OCI-LY7 (cell line): ENCODE measurements at regions of chr14 and their contacts with region 1.

Region 1: DNA sequence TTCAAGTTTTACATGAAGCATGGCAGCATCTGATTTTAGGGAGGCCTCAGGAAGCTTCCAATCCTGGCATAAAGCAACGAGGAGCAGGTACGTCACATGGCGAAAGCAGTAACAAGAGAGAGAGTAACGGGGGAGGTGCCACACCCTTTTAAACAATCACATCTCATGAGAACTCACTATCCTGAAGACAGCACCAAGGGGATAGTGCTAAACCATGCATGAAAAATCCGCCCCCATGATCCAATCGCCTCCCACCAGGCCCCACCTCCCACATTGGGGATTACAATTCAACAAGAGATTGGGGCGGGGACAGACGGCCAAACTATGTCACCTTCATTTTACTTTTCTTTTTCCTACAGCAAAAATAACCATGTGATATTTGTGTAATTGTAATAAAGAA is 7.2 kb upstream of the MAP3K9 start:
- DNase-seq: no peak
- H3K4me3 ChIP-seq: no peak overlapping the region
- H3K27ac ChIP-seq: no peak overlapping the region
- H3K4me1 ChIP-seq: peaks cover 18% of the 10 kb centered on the region
- CTCF ChIP-seq: no peak

Region 2: GRCh38 chr14:70086685-70087379 is 729.7 kb before region 1 on chr14:
- CTCF ChIA-PET with region 1: no interaction called
- POLR2A ChIA-PET with region 1: no interaction called
- intact Hi-C with region 1: loop called (anchors 5 kb)
- DNase-seq: peak; percentile 24
- H3K4me3 ChIP-seq: no peak overlapping the region
- H3K27ac ChIP-seq: no peak overlapping the region
- H3K4me1 ChIP-seq: no peaks in the 10 kb centered on the region
- CTCF ChIP-seq: peak; percentile 76

Region 3: DNA sequence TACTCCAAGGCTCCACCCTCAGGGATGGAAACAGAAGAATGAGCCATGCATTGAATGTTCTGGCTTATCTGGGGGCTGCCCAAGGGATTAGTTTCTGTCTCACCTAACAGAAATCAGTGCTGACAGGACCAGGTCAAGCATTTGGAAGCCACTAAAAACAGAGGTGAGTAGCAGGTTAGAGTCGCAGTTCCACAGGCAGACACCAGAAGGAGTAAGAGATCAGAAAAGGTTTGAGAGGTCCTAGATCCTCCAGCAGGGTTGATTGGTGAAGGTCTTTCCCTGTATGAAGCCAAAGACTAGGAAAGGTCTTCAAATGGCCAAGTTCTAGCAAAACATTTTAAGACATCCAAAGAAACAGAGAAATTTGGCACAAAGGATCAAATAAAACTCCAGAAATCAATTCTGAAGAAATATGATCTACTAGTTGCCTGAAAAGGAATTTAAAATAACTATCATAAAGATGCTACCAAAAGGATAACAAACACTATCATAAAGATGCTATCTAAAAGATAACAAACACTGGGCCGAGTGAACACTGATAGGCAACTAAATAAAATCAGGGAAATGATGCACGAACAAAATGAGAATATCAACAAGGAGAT is 194.3 kb before region 1 on chr14:
- CTCF ChIA-PET with region 1: interaction called, 3 read pairs
- POLR2A ChIA-PET with region 1: interaction called, 6 read pairs
- intact Hi-C with region 1: loop called (anchors 2 kb)
- DNase-seq: peak; percentile 74
- H3K4me3 ChIP-seq: no peak overlapping the region
- H3K27ac ChIP-seq: no peak overlapping the region
- H3K4me1 ChIP-seq: no peaks in the 10 kb centered on the region
- CTCF ChIP-seq: peak; percentile 91

Region 4: DNA sequence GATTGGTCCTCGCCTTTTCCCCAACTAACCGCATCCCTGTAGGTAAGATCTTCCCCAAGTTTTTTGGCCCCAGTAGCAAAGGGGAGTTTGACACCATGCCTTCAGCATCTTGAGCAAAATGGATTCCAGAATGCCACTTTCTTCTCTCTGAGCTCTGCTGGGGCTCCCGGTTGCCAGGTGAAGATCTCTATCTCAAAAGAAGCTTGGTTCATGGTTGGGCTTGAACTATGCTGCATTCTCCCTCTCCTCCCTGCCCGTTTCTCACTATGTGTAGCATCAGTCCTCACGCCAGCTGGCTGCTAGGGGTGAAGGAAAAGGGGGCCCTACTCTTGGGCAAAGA is 173.6 kb before region 1 on chr14:
- CTCF ChIA-PET with region 1: no interaction called
- POLR2A ChIA-PET with region 1: no interaction called
- intact Hi-C with region 1: no loop called
- DNase-seq: no peak
- H3K4me3 ChIP-seq: peak overlapping the region; percentile 86
- H3K27ac ChIP-seq: peak overlapping the region; percentile 82
- H3K4me1 ChIP-seq: peaks cover 65% of the 10 kb centered on the region
- CTCF ChIP-seq: no peak

Region 5: DNA sequence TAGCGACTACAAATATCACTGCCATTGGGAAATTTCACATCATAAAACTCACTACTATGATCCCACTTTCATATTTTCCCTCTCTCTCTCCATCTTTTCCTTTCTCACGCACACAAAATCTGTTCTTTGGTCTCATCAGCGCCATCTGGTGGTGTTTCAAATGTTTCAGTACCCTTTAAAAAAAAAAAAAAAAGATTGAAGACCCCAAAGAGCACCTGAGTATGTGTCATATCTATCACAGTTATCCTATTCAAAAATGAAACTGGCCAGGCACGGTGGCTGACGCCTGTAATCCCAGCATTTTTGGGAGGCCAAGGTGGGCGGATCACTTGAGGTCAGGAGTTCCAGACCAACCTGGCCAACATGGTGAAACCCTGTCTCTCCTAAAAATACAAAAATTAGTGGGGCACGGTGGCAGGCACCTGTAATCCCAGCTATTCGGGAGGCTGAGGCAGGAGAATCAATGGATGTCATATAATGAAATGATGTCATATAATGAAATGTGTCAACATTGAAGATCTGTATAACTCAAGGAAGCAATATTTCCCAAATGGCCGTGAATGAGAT is 102.4 kb before region 1 on chr14:
- CTCF ChIA-PET with region 1: interaction called, 5 read pairs
- POLR2A ChIA-PET with region 1: no interaction called
- intact Hi-C with region 1: loop called (anchors 2 kb)
- DNase-seq: peak; percentile 79
- H3K4me3 ChIP-seq: no peak overlapping the region
- H3K27ac ChIP-seq: no peak overlapping the region
- H3K4me1 ChIP-seq: peaks cover 14% of the 10 kb centered on the region
- CTCF ChIP-seq: peak; percentile 90

Region 6: DNA sequence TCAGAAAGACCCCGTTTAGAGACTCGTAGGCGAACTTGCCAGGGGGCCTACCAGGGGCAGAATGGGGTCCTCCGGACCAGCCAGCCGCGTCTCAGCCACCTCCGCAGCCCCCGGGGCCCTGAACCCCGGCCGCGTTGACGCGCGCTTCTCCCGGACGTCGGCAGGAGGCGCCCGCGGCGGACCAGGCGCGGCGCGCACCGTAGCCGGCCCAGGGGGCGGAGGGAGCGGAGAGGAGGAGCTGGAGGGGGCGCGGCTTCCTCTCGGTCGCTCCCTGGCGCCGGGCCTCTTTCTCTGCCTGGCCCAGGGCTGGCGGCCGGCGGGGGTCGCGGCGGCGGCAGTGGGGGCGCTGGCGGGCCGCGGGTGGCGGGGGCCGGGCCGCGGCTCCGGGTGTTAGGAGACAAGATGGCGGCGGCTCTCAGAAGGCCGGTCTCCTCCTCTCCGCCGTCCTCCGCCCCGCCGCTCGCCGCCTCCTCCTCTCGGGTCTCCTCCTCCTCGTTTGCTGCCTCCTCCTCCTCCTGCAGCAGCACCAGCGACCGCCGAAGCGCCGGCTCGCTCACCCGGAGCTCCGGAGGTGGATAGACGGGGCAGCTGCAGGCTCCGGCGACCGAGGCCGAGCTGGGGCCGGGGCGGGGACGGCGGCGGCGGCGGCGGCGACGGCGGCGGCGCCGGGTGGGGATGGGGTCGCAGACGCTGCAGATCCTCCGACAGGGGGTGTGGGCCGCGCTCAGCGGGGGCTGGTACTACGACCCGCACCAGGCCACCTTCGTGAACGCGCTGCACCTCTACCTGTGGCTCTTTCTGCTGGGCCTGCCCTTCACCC is 90.9 kb after region 1 on chr14 and contains the start of gene PCNX1:
- CTCF ChIA-PET with region 1: no interaction called
- POLR2A ChIA-PET with region 1: no interaction called
- intact Hi-C with region 1: loop called (anchors 5 kb)
- DNase-seq: peak; percentile 94
- H3K4me3 ChIP-seq: peak within 1 kb of the TSS; percentile 81
- H3K27ac ChIP-seq: peak within 1 kb of the TSS; percentile 66
- H3K4me1 ChIP-seq: peaks cover 15% of the 10 kb centered on the region
- CTCF ChIP-seq: peak; percentile 81
- total RNA-seq, gene PCNX1: 27.7 and 33.8 TPM in 2 replicates

Region 7: GRCh38 chr14:70955543-70956480 is 139.3 kb after region 1 on chr14:
- CTCF ChIA-PET with region 1: interaction called, 4 read pairs
- POLR2A ChIA-PET with region 1: interaction called, 3 read pairs
- intact Hi-C with region 1: loop called (anchors 5 kb)
- DNase-seq: peak; percentile 27
- H3K4me3 ChIP-seq: no peak overlapping the region
- H3K27ac ChIP-seq: no peak overlapping the region
- H3K4me1 ChIP-seq: no peaks in the 10 kb centered on the region
- CTCF ChIP-seq: peak; percentile 82